Activated B cell treated with CpG ODN at 0.5 μM for 24 hours (primary cell): ENCODE measurements at regions of chr14 and their contacts with region 1.

Region 1: GRCh38 chr14:20682435-20683124 is 1.8 kb upstream of the RNASE4 start:
- DNase-seq: peak; percentile 70
- ATAC-seq: peak; percentile 59
- H3K4me3 Mint-ChIP-seq: no peak overlapping the region
- H3K27ac Mint-ChIP-seq: no peak overlapping the region
- H3K4me1 Mint-ChIP-seq: peaks cover 16% of the 10 kb centered on the region
- H3K27me3 Mint-ChIP-seq: no peaks in the 10 kb centered on the region
- CTCF ChIP-seq: no peak

Region 2: GRCh38 chr14:20332788-20333493 is 349.6 kb before region 1 on chr14 and contains the start of gene CCNB1IP1:
- CTCF ChIA-PET with region 1: interaction called, 4 read pairs
- POLR2A ChIA-PET with region 1: interaction called, 3 read pairs
- intact Hi-C with region 1: loop called (anchors 2 kb)
- DNase-seq: no peak
- ATAC-seq: peak; percentile 97
- H3K4me3 Mint-ChIP-seq: peak within 1 kb of the TSS; percentile 99
- H3K27ac Mint-ChIP-seq: peak within 1 kb of the TSS; percentile 89
- H3K4me1 Mint-ChIP-seq: peaks cover 29% of the 10 kb centered on the region
- H3K27me3 Mint-ChIP-seq: no peaks in the 10 kb centered on the region
- CTCF ChIP-seq: no peak
- total RNA-seq, gene CCNB1IP1: 34.0 and 35.3 TPM in 2 replicates

Region 3: GRCh38 chr14:20461274-20462001 is 221.1 kb before region 1 on chr14 and contains the start of gene PIP4P1:
- CTCF ChIA-PET with region 1: no interaction called
- POLR2A ChIA-PET with region 1: interaction called, 37 read pairs
- intact Hi-C with region 1: loop called (anchors 1 kb)
- DNase-seq: peak; percentile 94
- ATAC-seq: peak; percentile 86
- H3K4me3 Mint-ChIP-seq: peak within 1 kb of the TSS; percentile 91
- H3K27ac Mint-ChIP-seq: peak within 1 kb of the TSS; percentile 96
- H3K4me1 Mint-ChIP-seq: peaks cover 55% of the 10 kb centered on the region
- H3K27me3 Mint-ChIP-seq: no peaks in the 10 kb centered on the region
- CTCF ChIP-seq: no peak
- total RNA-seq, gene PIP4P1: 84.8 and 87.3 TPM in 2 replicates

Region 4: GRCh38 chr14:20662968-20663732 is 19.4 kb before region 1 on chr14:
- CTCF ChIA-PET with region 1: interaction called, 95 read pairs
- POLR2A ChIA-PET with region 1: interaction called, 180 read pairs
- intact Hi-C with region 1: loop called (anchors 1 kb)
- DNase-seq: peak; percentile 67
- ATAC-seq: peak; percentile 85
- H3K4me3 Mint-ChIP-seq: peak overlapping the region; percentile 87
- H3K27ac Mint-ChIP-seq: peak overlapping the region; percentile 67
- H3K4me1 Mint-ChIP-seq: peaks cover 53% of the 10 kb centered on the region
- H3K27me3 Mint-ChIP-seq: no peaks in the 10 kb centered on the region
- CTCF ChIP-seq: no peak

Region 5: GRCh38 chr14:21103710-21104447 is 421.3 kb after region 1 on chr14:
- CTCF ChIA-PET with region 1: no interaction called
- POLR2A ChIA-PET with region 1: interaction called, 7 read pairs
- intact Hi-C with region 1: loop called (anchors 1 kb)
- DNase-seq: peak; percentile 91
- ATAC-seq: peak; percentile 88
- H3K4me3 Mint-ChIP-seq: peak overlapping the region; percentile 79
- H3K27ac Mint-ChIP-seq: peak overlapping the region; percentile 90
- H3K4me1 Mint-ChIP-seq: peaks cover 21% of the 10 kb centered on the region
- H3K27me3 Mint-ChIP-seq: peaks cover 11% of the 10 kb centered on the region
- CTCF ChIP-seq: no peak